MCF 10A (cell line): ENCODE measurements at regions of chr1 and their contacts with region 1.

Region 1: DNA sequence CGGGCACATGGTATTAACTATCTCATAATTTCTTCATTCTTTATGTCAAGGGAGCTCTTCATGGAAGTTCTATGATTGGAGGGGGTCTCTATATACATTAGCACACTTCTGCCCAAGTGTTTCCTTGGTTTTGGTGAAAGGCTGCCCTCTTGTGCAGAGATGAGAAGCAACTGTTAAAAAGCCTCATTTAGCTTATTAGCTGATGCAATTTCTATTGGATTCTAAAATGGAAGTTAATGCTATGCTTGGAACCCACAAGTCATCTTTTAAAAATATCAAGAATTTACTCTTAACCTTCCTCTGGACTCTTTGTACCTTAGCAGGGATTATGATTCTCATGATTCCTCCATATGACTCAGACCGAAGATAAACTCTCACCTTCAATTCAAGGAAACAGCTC is 328.9 kb downstream of the PTBP2 start:
- DNase-seq: peak; percentile 43
- H3K4me3 Mint-ChIP-seq: no peak overlapping the region
- H3K27ac Mint-ChIP-seq: no peak overlapping the region
- H3K4me1 Mint-ChIP-seq: peaks cover 11% of the 10 kb centered on the region
- H3K27me3 Mint-ChIP-seq: no peaks in the 10 kb centered on the region
- CTCF ChIP-seq: peak; percentile 31

Region 2: DNA sequence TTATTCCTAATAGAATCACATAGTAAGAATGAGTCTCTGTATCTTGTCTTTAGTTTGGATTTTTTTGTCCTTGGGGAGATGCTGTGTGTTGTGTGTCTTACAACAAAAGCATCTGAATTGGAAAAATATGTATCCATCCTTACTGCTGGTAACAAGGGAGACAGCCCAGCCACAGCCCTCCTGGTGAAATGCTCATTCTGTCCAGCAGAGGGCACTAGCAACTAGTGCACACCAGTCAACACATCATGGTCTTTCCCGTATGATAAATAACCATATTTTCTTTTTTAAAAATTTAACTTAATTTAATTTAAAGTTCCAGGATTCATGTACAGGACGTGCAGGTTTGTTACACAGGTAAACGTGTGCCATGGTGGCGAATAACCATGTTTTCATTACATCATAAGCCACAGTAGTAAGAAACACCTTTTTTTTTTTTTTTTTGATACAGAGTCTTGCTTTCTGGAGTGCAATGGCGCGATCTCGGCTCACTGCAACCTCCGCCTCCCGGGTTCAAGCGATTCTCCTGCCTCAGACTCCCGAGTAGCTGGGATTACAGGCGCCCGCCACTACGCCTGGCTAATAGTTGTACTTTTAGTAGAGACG is 83.9 kb before region 1 on chr1:
- CTCF ChIA-PET with region 1: interaction called, 3 read pairs
- POLR2A ChIA-PET with region 1: no interaction called
- intact Hi-C with region 1: loop called (anchors 1 kb)
- DNase-seq: peak; percentile 70
- H3K4me3 Mint-ChIP-seq: peak overlapping the region; percentile 4
- H3K27ac Mint-ChIP-seq: no peak overlapping the region
- H3K4me1 Mint-ChIP-seq: peaks cover 6% of the 10 kb centered on the region
- H3K27me3 Mint-ChIP-seq: no peaks in the 10 kb centered on the region
- CTCF ChIP-seq: peak; percentile 90